ENCODE measurements at regions of chrX and their contacts with region 1.

Region 1: DNA sequence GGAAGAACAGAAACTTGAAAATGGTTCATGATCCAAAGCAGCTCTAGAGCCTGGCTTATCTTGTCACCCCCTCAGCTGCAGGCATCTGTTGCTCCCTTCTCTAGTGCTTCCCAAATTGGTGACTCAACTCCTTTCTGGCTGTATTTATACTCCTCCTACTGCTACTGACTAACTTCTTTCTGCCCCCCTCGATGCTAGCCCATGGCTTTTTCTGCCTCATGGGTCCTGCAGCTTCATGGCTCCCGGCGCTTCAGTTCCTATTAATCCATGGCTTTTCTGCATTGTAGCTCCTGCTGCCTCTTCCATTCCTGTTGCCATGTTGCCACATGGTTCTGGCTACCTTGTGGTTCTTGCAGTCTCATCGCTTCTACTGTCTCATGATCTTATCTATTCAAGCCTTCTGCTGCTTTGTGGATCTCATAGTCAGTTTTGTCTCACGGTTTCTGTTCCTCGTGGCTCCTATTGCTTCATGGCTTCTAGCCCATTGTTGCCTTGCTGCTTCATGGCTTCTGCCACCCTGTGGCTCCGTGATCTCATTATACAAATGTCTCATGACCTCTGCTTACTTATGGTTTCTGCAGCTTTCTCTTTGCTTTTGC is 48.1 kb downstream of the SMC1A start:
- H3K4me3 Mint-ChIP-seq: peak overlapping the region; percentile 37
- H3K27ac Mint-ChIP-seq: peak overlapping the region; percentile 77
- H3K4me1 Mint-ChIP-seq: peaks cover 30% of the 10 kb centered on the region
- H3K27me3 Mint-ChIP-seq: no peaks in the 10 kb centered on the region

Region 2: DNA sequence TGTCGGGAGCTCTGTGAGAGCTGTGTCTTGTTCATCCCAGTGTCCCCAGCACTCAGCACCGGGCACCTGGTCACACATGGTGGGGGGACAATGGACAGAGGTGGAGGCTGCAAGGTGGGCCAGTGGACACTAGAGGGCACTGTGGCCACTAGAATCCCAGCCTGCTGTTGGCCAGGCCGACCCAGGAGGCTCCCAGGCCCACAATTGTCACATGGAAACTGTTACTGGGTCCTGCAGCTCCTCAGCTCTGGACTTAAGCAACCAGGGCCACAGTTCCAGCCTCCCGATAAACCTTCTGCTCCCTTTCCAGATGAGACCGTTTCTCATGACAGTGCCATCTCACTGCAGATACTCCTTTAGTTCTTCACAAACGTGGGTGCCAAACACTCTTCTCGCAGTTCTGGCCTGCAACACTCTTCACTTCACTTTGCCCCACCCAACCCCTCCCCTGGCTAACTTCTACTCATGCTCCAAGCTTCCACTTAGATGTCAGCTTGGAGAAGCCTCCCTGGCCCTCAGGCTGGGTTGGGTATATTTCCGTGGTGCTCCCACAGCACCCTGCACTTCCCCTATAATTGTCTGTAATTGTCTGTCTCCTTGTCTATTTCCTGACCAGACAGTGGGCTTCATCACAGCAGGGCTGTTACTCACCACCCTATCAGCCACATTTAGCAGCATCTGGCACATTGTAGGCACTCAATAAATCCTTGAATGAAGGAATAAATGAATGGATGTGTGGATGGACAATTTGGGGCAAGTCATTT is 89.5 kb before region 1 on chrX:
- intact Hi-C with region 1: loop called (anchors 10 kb)
- H3K4me3 Mint-ChIP-seq: no peak overlapping the region
- H3K27ac Mint-ChIP-seq: peak overlapping the region; percentile 50
- H3K4me1 Mint-ChIP-seq: peaks cover 69% of the 10 kb centered on the region
- H3K27me3 Mint-ChIP-seq: no peaks in the 10 kb centered on the region

Region 3: DNA sequence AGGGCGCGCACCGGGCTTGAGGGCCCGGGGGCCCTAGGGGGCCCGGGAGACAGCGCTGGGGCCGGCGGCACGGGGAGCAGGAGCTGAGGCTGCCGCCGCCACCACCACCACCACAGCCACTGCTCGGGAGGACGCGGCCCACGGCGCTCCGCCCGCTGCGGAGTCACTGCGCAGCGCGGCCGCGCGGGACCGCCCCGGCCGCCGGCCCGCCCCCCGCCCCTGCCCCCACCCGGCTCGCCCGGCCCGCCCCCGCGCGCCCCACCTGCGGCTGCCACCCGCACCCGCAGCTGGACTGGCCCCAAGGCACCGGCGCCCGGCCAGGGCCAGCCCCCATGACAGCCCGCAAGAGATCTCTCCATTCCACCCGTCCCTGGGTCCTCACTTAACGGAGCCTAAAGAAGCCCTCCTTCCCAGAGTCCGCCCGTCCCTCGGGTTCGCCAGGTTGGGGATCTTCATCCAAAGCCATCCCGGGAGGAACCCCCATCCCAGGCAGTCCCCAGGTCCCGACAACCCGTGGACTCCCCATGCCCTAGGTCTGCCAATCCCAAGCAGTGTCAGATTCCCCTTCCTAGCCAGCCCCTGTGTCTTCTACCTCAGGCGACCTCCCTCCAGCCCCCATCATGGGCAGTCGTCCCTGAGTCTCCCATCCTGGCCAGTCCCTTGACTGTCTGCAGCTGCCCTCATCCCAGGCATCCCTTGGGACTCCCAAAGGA is 52.9 kb before region 1 on chrX:
- intact Hi-C with region 1: loop called (anchors 10 kb)
- H3K4me3 Mint-ChIP-seq: peak overlapping the region; percentile 95
- H3K27ac Mint-ChIP-seq: no peak overlapping the region
- H3K4me1 Mint-ChIP-seq: peaks cover 44% of the 10 kb centered on the region
- H3K27me3 Mint-ChIP-seq: peaks cover 48% of the 10 kb centered on the region

Region 4: DNA sequence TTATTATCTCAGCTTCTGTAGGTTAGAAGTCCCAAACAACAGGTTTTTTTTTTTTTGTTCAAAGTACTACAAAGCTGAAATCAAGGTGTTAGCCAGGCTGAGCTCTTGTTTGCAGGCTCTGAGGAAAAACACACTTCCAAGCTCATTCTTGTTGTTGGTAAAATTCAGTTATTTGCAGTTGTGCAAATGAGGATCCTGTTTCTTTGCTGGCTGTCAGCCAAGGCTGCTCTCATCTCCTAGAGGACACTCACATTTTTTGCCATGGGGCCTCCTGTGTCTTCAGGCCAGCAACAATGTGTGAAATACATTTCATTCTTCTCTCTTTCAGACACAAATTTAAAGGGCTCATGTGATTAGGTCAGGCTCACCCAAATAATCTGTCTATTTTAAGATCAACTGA is 120.1 kb after region 1 on chrX:
- intact Hi-C with region 1: no loop called
- H3K4me3 Mint-ChIP-seq: no peak overlapping the region
- H3K27ac Mint-ChIP-seq: no peak overlapping the region
- H3K4me1 Mint-ChIP-seq: peaks cover 11% of the 10 kb centered on the region
- H3K27me3 Mint-ChIP-seq: no peaks in the 10 kb centered on the region